ENCODE measurements at regions of chr3 and their contacts with region 1.

Region 1: GRCh38 chr3:15805756-15806266 is 8.0 kb upstream of the ANKRD28 start:
- DNase-seq: no peak
- H3K4me3 Mint-ChIP-seq: no peak overlapping the region
- H3K27ac Mint-ChIP-seq: no peak overlapping the region
- H3K4me1 Mint-ChIP-seq: peaks cover 35% of the 10 kb centered on the region
- H3K27me3 Mint-ChIP-seq: no peaks in the 10 kb centered on the region

Region 2: GRCh38 chr3:15629860-15630597 is 175.8 kb before region 1 on chr3:
- CTCF ChIA-PET with region 1: interaction called, 58 read pairs
- DNase-seq: peak; percentile 78
- H3K4me3 Mint-ChIP-seq: no peak overlapping the region
- H3K27ac Mint-ChIP-seq: no peak overlapping the region
- H3K4me1 Mint-ChIP-seq: peaks cover 18% of the 10 kb centered on the region
- H3K27me3 Mint-ChIP-seq: peaks cover 4% of the 10 kb centered on the region

Region 3: DNA sequence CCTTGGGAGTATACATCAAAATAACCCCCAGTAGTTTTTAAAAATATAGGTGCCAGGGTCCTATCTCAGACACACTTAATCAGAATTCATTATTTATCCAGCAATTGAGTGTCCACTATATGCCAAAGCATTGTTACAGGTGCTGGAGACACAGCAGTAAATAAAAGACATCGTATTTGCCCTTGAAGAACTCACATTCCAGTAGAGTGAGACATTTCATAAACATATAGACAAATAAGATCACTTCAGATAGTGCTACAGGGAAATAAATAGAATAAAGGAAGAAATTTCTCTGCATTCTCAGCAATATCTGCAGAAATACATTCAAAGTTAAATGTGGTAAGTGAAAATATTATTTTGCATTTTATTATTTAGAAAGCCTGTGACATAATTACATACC is 26.1 kb after region 1 on chr3:
- CTCF ChIA-PET with region 1: no interaction called
- DNase-seq: no peak
- H3K4me3 Mint-ChIP-seq: no peak overlapping the region
- H3K27ac Mint-ChIP-seq: no peak overlapping the region
- H3K4me1 Mint-ChIP-seq: no peaks in the 10 kb centered on the region
- H3K27me3 Mint-ChIP-seq: no peaks in the 10 kb centered on the region

Region 4: GRCh38 chr3:15989419-15989818 is 183.6 kb after region 1 on chr3:
- CTCF ChIA-PET with region 1: no interaction called
- DNase-seq: no peak
- H3K4me3 Mint-ChIP-seq: no peak overlapping the region
- H3K27ac Mint-ChIP-seq: no peak overlapping the region
- H3K4me1 Mint-ChIP-seq: no peaks in the 10 kb centered on the region
- H3K27me3 Mint-ChIP-seq: peaks cover 6% of the 10 kb centered on the region